Posterior cingulate gyrus (tissue), 11 donors: ENCODE measurements at regions of chr1 and their contacts with region 1.

Region 1: DNA sequence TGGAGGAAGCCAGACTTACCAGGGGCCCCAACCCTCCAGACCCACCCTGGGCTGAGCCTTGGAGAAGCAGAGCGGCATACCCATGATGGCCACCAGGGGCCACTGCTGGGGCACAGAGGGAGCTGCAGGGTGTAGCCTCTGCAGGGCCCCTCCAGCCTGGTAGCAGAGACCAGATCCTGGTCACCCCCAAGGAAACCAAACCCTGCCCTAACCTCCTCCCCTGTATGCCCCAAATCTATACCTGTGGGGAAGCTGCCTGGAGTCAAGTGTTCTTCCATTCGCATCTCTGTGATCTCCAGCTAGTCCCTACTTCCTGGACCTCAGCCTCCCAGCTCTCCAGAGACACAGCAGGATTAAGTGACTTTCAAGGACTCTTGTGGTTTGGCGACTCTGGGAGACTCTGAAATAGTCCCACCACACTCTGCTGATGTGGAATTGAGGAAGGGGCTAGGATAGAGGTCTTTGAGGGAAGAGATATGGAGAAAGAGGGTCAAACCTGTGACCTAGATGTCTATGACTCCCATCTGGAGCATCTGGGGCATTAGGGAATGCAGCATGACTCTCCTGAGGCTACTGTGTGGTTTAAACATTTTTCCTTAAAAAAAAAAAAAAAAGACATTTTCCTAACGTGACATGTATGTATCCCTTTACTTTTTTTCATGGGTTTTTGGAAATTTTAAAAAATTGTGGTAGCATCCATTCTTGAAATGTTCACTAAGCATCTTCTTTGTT is 119.2 kb upstream of the IPO9 start:
- DNase-seq: peak; percentile 55 to 97 (median 83)

Region 2: DNA sequence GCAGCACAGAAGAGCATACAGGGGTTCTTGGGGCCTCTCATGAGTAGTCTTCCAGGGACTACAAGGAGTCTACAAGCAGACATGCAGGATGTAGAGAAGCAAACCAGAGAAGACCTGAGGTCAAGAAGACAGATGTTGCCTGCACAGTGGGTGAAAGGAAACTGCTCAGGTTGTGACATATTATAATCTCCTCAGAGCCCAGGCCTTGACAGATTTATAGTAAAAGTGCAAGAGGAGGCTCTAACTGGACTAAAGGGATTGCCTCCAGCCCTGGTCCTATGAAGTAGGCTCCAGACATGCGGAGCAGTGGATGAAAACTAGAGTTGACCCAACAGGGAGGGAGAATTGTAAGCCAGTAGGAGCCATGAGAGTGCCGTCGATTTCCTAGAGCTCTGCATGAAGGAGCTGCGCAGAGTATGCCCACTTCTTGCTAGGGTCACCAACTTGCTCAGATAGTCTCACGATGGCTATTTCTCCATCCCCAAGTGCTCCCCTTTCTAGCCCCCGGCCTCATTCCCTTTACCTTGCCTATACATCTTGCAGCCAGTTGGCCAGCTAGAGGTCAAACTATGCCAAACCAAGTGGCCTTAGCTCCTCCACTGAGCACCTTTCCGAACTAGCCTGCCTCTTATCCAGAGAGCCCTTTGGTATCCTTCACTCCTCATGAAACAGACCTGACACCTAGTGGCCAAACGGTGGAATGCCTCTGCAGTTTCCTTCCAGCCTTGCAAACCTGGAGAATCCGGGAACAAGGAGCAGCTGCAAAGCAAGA is 83.0 kb after region 1 on chr1:
- intact Hi-C with region 1: loop called (anchors 1 kb)
- DNase-seq: peak; percentile 61 to 97 (median 86)